AG04449 (cell line): ENCODE measurements at regions of chr10 and their contacts with region 1.

Region 1: GRCh38 chr10:96995851-96996250 is 163.8 kb downstream of the LCOR start:
- DNase-seq: no peak
- H3K4me3 ChIP-seq: no peak overlapping the region
- CTCF ChIP-seq: no peak

Region 2: DNA sequence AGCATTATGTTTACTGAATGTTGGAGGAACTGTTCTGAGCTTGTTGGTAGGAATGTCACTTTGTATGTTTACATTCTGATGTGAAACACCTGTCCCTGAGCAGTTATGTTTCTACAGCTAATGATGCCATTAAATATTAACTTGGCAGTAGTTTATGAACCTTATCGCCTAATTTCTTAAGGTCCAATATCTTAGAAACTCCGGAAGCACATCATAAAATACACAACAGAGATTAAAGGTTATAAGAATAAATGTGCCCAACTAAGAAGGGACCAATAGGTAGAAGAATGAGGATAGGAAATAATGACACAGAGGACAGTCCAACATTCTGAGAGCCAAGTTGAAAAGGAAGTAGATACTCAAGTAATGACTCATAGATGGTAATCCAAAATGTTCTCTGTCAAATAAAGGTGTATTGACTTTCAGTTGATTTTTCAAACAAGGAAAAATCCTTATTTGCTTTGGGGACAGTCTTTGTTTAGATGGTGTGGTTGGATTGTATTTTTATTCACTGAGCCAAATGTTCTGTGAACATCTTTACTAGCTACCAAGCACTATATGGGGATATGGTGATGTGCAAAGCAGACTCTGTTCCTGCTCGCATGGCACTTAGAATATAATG is 131.8 kb before region 1 on chr10:
- CTCF ChIA-PET with region 1: no interaction called
- POLR2A ChIA-PET with region 1: no interaction called
- DNase-seq: no peak
- H3K4me3 ChIP-seq: no peak overlapping the region
- CTCF ChIP-seq: no peak

Region 3: GRCh38 chr10:96982155-96982930 is 13.5 kb before region 1 on chr10:
- CTCF ChIA-PET with region 1: no interaction called
- POLR2A ChIA-PET with region 1: no interaction called
- DNase-seq: no peak
- H3K4me3 ChIP-seq: no peak overlapping the region
- CTCF ChIP-seq: no peak

Region 4: GRCh38 chr10:97025613-97026242 is 29.9 kb after region 1 on chr10:
- CTCF ChIA-PET with region 1: interaction called, 13 read pairs
- POLR2A ChIA-PET with region 1: no interaction called
- DNase-seq: no peak
- H3K4me3 ChIP-seq: no peak overlapping the region
- CTCF ChIP-seq: peak; percentile 44